Natural killer cell (primary cell): ENCODE measurements at regions of chr11 and their contacts with region 1.

Region 1: GRCh38 chr11:575996-576768 is at the start of gene PHRF1:
- DNase-seq: peak; percentile 94 to 98
- ATAC-seq: peak; percentile 88 to 95 (median 90)
- H3K4me3 ChIP-seq: peak within 1 kb of the TSS; percentile 98
- H3K4me3 Mint-ChIP-seq: peak within 1 kb of the TSS; percentile 94
- H3K27ac ChIP-seq: peak within 1 kb of the TSS; percentile 99
- H3K27ac Mint-ChIP-seq: peak within 1 kb of the TSS; percentile 86 to 93
- H3K4me1 ChIP-seq: peaks cover 52% of the 10 kb centered on the region
- H3K4me1 Mint-ChIP-seq: peaks cover 42 to 52% of the 10 kb centered on the region in 2 donors
- H3K27me3 ChIP-seq: peaks cover 3% of the 10 kb centered on the region
- H3K27me3 Mint-ChIP-seq: peaks cover 0 to 10% of the 10 kb centered on the region in 2 donors
- CTCF ChIP-seq: no peak
- total RNA-seq, gene PHRF1: 46.1 to 52.0 (median 46.9) TPM

Region 2: DNA sequence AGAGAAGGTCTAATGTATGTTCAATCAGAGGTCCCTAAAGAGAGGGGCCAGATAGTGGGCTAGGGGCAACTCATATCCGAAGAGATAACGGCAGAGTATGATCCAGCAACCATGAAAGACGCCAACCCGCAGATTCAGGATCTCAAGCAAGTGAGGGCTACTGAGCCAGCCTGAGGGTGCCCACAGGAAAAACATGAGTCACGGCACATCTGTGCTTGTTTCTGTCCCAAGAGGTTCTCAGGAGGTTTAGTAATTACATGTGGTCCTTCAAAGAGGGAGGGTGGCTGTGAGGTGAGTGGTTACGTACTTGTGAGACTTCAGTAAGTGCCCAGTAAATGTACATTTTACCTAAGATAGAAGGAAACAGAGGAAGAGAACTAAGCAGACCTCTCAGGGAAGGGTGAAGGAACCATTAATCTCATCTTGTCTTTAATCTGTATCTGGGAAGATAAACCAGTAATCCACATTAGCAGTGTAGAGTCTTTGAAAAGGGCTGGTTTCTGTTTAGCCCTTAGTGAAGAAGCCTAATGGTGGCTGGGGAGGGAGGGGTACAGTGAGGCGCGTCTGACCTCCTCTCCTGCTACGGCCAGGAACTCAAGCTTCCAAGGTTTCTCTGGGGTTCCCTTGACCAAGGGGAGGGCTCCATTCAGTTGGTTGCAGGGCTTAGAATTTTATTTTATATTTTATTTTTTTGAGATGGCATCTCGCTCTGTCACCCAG is 350.3 kb before region 1 on chr11:
- intact Hi-C with region 1: no loop called
- DNase-seq: no peak
- ATAC-seq: no peak
- H3K4me3 ChIP-seq: no peak overlapping the region
- H3K4me3 Mint-ChIP-seq: no peak overlapping the region
- H3K27ac ChIP-seq: no peak overlapping the region
- H3K27ac Mint-ChIP-seq: no peak overlapping the region
- H3K4me1 ChIP-seq: no peaks in the 10 kb centered on the region
- H3K4me1 Mint-ChIP-seq: no peaks in the 10 kb centered on the region
- H3K27me3 ChIP-seq: no peaks in the 10 kb centered on the region
- H3K27me3 Mint-ChIP-seq: no peaks in the 10 kb centered on the region
- CTCF ChIP-seq: no peak

Region 3: DNA sequence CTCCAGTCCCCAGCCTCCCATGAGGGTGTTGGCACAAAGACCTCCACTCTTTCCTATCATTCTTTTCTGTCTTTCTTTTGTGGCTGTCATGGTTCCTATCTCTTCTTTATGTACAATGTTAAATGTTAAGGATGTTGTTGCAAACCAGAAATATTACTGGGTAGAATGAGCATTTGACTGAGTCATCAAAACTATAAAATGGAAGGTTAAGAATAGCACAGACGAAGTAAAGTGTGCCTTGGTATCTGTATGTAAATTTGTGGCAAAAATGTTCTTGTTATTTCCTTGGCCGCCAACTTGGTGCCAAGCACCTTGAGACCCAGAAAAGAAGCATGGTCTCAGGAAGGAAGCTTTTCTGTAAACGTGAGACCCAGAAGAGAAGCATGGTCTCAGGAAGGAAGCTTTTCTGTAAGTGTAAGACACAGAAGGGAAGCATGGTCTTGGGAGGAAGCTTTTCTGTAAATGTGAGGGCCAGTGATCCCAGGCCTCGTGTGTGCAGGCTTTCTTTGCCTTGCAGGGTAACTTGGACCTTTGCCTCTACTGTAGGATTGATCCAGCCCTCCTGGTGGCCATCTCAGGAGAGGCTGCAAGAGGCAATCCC is 188.9 kb before region 1 on chr11:
- intact Hi-C with region 1: loop called (anchors 5 kb)
- DNase-seq: no peak
- ATAC-seq: peak in 2 of 3 donors; percentile 26 to 55
- H3K4me3 ChIP-seq: no peak overlapping the region
- H3K4me3 Mint-ChIP-seq: peak overlapping the region; percentile 2
- H3K27ac ChIP-seq: peak overlapping the region; percentile 14
- H3K27ac Mint-ChIP-seq: peak overlapping the region; percentile 12 to 47
- H3K4me1 ChIP-seq: peaks cover 27% of the 10 kb centered on the region
- H3K4me1 Mint-ChIP-seq: peaks cover 18 to 26% of the 10 kb centered on the region in 2 donors
- H3K27me3 ChIP-seq: no peaks in the 10 kb centered on the region
- H3K27me3 Mint-ChIP-seq: peaks cover 0 to 7% of the 10 kb centered on the region in 2 donors
- CTCF ChIP-seq: no peak

Region 4: GRCh38 chr11:560305-561147 is 15.7 kb before region 1 on chr11 and contains the starts of genes LMNTD2 and RASSF7:
- intact Hi-C with region 1: no loop called
- DNase-seq: peak; percentile 93 to 96
- ATAC-seq: peak; percentile 95 to 98 (median 96)
- H3K4me3 ChIP-seq: peak within 1 kb of the TSS; percentile 61
- H3K4me3 Mint-ChIP-seq: peak within 1 kb of the TSS; percentile 93
- H3K27ac ChIP-seq: peak within 1 kb of the TSS; percentile 87
- H3K27ac Mint-ChIP-seq: peak within 1 kb of the TSS; percentile 75 to 78
- H3K4me1 ChIP-seq: peaks cover 26% of the 10 kb centered on the region
- H3K4me1 Mint-ChIP-seq: peaks cover 5 to 18% of the 10 kb centered on the region in 2 donors
- H3K27me3 ChIP-seq: no peaks in the 10 kb centered on the region
- H3K27me3 Mint-ChIP-seq: peaks cover 0 to 2% of the 10 kb centered on the region in 2 donors
- CTCF ChIP-seq: no peak
- total RNA-seq, gene LMNTD2: 3.5 to 5.2 (median 5.0) TPM
- total RNA-seq, gene RASSF7: 19.0 to 21.7 (median 20.0) TPM

Region 5: GRCh38 chr11:615504-616319 is 39.5 kb after region 1 on chr11 and contains the start of gene IRF7:
- intact Hi-C with region 1: loop called (anchors 5 kb)
- DNase-seq: peak; percentile 84 to 91
- ATAC-seq: peak; percentile 80 to 92 (median 82)
- H3K4me3 ChIP-seq: peak within 1 kb of the TSS; percentile 88
- H3K4me3 Mint-ChIP-seq: peak within 1 kb of the TSS; percentile 92
- H3K27ac ChIP-seq: peak within 1 kb of the TSS; percentile 93
- H3K27ac Mint-ChIP-seq: peak within 1 kb of the TSS; percentile 89
- H3K4me1 ChIP-seq: peaks cover 39% of the 10 kb centered on the region
- H3K4me1 Mint-ChIP-seq: peaks cover 6 to 22% of the 10 kb centered on the region in 2 donors
- H3K27me3 ChIP-seq: no peaks in the 10 kb centered on the region
- H3K27me3 Mint-ChIP-seq: no peaks in the 10 kb centered on the region
- CTCF ChIP-seq: no peak
- total RNA-seq, gene IRF7: 63.3 to 97.3 (median 77.3) TPM